ENCODE measurements at regions of chr1 and their contacts with region 1.

Region 1: DNA sequence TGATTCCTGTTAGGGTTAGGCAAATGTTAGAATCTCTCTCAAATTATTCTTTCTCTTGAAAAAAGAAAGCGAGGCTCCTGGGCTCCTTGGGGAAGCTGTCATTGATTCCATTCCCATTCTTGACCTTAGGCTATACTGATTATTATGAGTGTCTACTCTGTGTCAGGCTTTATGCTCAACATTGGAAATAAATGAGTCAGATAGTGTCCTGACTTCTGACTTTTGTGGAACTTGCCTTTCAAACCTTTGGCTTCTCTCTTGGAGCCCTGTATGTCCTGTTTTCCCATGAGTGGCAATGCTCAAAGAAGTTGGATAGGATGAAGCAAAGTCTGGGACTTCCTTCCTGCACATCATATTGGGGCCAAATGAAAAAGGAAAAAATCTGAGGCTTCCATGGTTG is 11.6 kb downstream of the AGO1 start:
- DNase-seq: no peak
- ATAC-seq: no peak
- H3K4me3 ChIP-seq: no peak overlapping the region
- H3K27ac ChIP-seq: no peak overlapping the region
- H3K4me1 ChIP-seq: peaks cover 0 to 6% of the 10 kb centered on the region in 2 experiments; a peak in 1 of 4 replicates
- H3K27me3 ChIP-seq: no peaks in the 10 kb centered on the region
- CTCF ChIP-seq: no peak
- POLR2A ChIP-seq: no peak
- RAD21 ChIP-seq: no peak

Region 2: DNA sequence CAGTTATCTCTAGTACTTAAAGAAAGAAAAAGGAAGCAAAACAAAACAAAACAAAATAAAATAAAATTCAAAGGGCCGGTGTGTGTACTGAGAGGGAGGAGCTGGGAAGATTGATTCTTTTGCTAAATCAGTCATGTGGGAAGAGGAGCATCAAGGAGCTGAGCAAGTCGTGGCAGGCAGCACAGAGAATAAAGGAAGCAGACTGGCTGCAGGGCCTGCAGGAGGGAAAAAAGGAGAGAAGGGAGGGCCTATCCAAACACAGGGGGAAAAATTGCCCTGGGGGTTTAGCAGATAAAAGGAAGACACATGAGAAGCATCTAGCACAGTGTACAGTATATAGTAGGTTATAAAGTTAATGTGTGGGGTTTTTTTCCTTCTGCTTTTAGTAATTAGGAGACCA is 59.3 kb before region 1 on chr1:
- CTCF ChIA-PET with region 1: no interaction called
- POLR2A ChIA-PET with region 1: no interaction called
- RAD21 ChIA-PET with region 1: no interaction called
- intact Hi-C with region 1: no loop called
- DNase-seq: no peak
- ATAC-seq: no peak
- H3K4me3 ChIP-seq: no peak overlapping the region
- H3K27ac ChIP-seq: no peak overlapping the region
- H3K4me1 ChIP-seq: no peaks in the 10 kb centered on the region
- H3K27me3 ChIP-seq: no peaks in the 10 kb centered on the region
- CTCF ChIP-seq: no peak
- POLR2A ChIP-seq: no peak
- RAD21 ChIP-seq: no peak

Region 3: GRCh38 chr1:35882945-35883634 is 11.6 kb before region 1 on chr1 and contains the start of gene AGO1:
- CTCF ChIA-PET with region 1: interaction called, 12 read pairs
- POLR2A ChIA-PET with region 1: no interaction called
- RAD21 ChIA-PET with region 1: no interaction called
- intact Hi-C with region 1: no loop called
- DNase-seq: peak; percentile 82
- ATAC-seq: peak; percentile 95
- H3K4me3 ChIP-seq: peak within 1 kb of the TSS; percentile 94 to 100
- H3K27ac ChIP-seq: peak within 1 kb of the TSS; percentile 80; the same call in 1 of the 2 replicates
- H3K4me1 ChIP-seq: peaks cover 0 to 31% of the 10 kb centered on the region in 2 experiments; a peak in 3 of 4 replicates
- H3K27me3 ChIP-seq: no peaks in the 10 kb centered on the region
- CTCF ChIP-seq: peak; percentile 78 to 93 (median 79)
- POLR2A ChIP-seq: peak; percentile 76
- RAD21 ChIP-seq: peak; percentile 36
- total RNA-seq, gene AGO1: 36.2 TPM

Region 4: DNA sequence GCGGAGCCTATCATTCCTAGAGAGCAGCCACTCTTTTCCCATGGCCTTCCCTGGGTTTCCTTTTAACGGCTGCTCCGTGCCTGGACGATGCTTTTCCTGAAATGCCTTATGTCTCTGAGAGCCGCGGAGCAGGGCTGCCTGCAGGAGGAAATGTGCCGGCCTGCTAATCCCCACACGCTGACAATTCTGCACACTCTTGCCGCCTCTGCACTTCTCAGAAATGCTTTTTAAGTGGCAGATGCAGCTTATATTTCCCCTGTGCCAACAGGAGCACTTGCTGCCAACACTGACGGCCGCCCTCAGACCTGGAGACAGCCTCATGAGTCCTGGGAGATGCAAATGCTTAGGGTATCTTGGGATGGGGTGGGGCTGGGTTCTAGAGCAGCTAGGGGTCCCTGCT is 886.4 kb after region 1 on chr1:
- CTCF ChIA-PET with region 1: no interaction called
- POLR2A ChIA-PET with region 1: no interaction called
- RAD21 ChIA-PET with region 1: no interaction called
- intact Hi-C with region 1: no loop called
- DNase-seq: no peak
- ATAC-seq: no peak
- H3K4me3 ChIP-seq: no peak overlapping the region
- H3K27ac ChIP-seq: no peak overlapping the region
- H3K4me1 ChIP-seq: no peaks in the 10 kb centered on the region
- H3K27me3 ChIP-seq: peaks cover 14% of the 10 kb centered on the region
- CTCF ChIP-seq: no peak
- POLR2A ChIP-seq: no peak
- RAD21 ChIP-seq: no peak

Measured in HCT116 (cell line).